CD4-positive, alpha-beta memory T cell (primary cell): ENCODE measurements at regions of chr16 and their contacts with region 1.

Region 1: DNA sequence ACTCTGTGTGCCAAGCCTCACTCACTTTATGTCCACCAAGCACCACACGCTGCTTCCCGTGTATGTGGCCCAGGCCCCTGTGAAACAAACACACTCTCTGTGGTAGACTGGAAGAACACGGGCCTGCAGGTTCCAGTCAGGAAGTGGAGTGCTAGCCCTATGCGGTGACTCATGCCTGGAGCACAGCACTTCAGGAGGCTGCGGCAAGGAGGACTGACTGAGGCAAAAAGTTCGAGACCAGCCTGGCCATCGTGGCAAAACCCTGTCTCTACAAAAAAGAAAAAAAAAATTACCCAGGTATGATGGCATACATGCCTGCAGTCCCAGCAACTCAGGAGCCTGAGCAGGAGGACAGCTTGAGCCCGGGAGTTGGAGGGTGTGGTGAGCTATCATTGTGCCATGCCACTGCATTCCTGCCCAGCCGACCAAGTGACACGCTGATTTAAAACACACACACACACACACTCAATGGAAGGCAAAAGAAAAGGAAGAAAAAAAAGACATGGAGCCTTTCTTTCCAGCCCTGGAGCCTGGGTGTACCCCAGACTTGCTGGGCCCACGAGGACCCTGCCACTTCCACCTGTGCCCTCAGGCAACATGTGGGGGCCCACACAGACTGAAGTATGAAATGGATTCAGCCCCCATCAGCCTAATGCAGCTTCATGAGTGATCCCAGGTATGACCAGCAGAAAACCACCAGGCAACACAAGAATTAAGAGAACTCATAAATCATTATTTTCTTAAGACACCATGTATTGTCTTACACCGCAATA is 126.6 kb downstream of the ANKRD11 start:
- DNase-seq: peak in 4 of 5 donors; percentile 22 to 83 (median 28)
- H3K4me3 ChIP-seq: no peak overlapping the region
- H3K4me3 Mint-ChIP-seq: peak overlapping the region; percentile 22 to 76 (median 64)
- H3K27ac ChIP-seq: peak overlapping the region; percentile 26
- H3K27ac Mint-ChIP-seq: peak overlapping the region; percentile 85 to 92 (median 90)
- H3K4me1 ChIP-seq: peaks cover 85% of the 10 kb centered on the region
- H3K4me1 Mint-ChIP-seq: peaks cover 62 to 99% (median 82%) of the 10 kb centered on the region in 4 donors
- H3K27me3 ChIP-seq: no peaks in the 10 kb centered on the region
- H3K27me3 Mint-ChIP-seq: no peaks in the 10 kb centered on the region

Region 2: GRCh38 chr16:89397331-89397861 is 33.6 kb after region 1 on chr16:
- CTCF ChIA-PET with region 1: no interaction called
- POLR2A ChIA-PET with region 1: no interaction called
- intact Hi-C with region 1: no loop called
- DNase-seq: no peak
- H3K4me3 ChIP-seq: no peak overlapping the region
- H3K4me3 Mint-ChIP-seq: no peak overlapping the region
- H3K27ac ChIP-seq: no peak overlapping the region
- H3K27ac Mint-ChIP-seq: peak overlapping the region in 2 of 7 donors; percentile 24 to 64
- H3K4me1 ChIP-seq: peaks cover 57% of the 10 kb centered on the region
- H3K4me1 Mint-ChIP-seq: peaks cover 39 to 85% (median 59%) of the 10 kb centered on the region in 4 donors
- H3K27me3 ChIP-seq: no peaks in the 10 kb centered on the region
- H3K27me3 Mint-ChIP-seq: no peaks in the 10 kb centered on the region

Region 3: GRCh38 chr16:89410794-89411309 is 47.0 kb after region 1 on chr16:
- CTCF ChIA-PET with region 1: interaction called, 5 read pairs
- POLR2A ChIA-PET with region 1: no interaction called
- intact Hi-C with region 1: loop called (anchors 2 kb)
- DNase-seq: peak in 2 of 5 donors; percentile 21 to 28
- H3K4me3 ChIP-seq: no peak overlapping the region
- H3K4me3 Mint-ChIP-seq: peak overlapping the region in 7 of 8 donors; percentile 59 to 84 (median 69)
- H3K27ac ChIP-seq: peak overlapping the region; percentile 45
- H3K27ac Mint-ChIP-seq: peak overlapping the region; percentile 88 to 97 (median 95)
- H3K4me1 ChIP-seq: peaks cover 93% of the 10 kb centered on the region
- H3K4me1 Mint-ChIP-seq: peaks cover 57 to 93% (median 79%) of the 10 kb centered on the region in 4 donors
- H3K27me3 ChIP-seq: no peaks in the 10 kb centered on the region
- H3K27me3 Mint-ChIP-seq: no peaks in the 10 kb centered on the region

Region 4: DNA sequence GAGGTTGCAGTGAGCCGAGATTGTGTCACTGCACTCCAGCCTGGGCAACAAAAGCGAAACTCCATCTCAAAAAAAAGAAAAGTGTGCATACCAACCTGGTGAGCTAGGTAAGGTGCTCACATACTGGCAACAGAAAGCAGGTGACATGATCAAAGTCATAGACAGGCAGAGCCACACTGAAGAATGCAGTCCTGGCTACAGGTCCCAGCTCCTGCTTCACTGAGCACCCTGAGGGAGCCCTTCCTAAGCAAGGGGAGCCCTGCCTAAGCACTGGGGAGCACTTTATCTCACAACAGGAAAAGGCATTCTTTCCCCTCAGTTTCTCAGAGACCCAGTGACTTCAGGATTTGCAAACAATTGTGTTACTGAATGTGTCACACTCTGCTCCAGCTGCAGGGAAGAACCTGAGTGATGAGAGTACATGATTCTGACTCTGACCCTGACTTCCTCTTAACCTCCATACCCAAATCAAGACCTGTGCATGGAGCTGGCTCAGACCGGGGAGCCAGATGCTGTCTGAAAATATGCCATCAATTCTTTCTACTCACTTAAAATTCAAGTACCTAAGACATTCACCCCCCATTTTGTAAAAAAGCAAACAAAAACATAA is 86.0 kb after region 1 on chr16:
- CTCF ChIA-PET with region 1: no interaction called
- POLR2A ChIA-PET with region 1: interaction called, 3 read pairs
- intact Hi-C with region 1: loop called (anchors 5 kb)
- DNase-seq: no peak
- H3K4me3 ChIP-seq: no peak overlapping the region
- H3K4me3 Mint-ChIP-seq: peak overlapping the region in 6 of 8 donors; percentile 4 to 50 (median 20)
- H3K27ac ChIP-seq: peak overlapping the region; percentile 9
- H3K27ac Mint-ChIP-seq: peak overlapping the region in 6 of 7 donors; percentile 10 to 88 (median 50)
- H3K4me1 ChIP-seq: peaks cover 99% of the 10 kb centered on the region
- H3K4me1 Mint-ChIP-seq: peaks cover 29 to 95% (median 71%) of the 10 kb centered on the region in 4 donors
- H3K27me3 ChIP-seq: no peaks in the 10 kb centered on the region
- H3K27me3 Mint-ChIP-seq: no peaks in the 10 kb centered on the region